Activated T-helper 1 cell treated with anti-CD3 and anti-CD28 coated beads, Interleukin-12 subunit alpha, Interleukin-12 subunit beta, Interleukin-2, Interleukin-4 antibody, amounts not matched to agents 30 ng/mL and 10 ng/mL and 1 ng/mL, durations not matched to agents 14 hours and 24 hours and 36 hours (primary cell): ENCODE measurements at regions of chr9 and their contacts with region 1.

Region 1: GRCh38 chr9:112793213-112793810 is 42.8 kb downstream of the SNX30 start:
- DNase-seq: peak; percentile 67
- H3K4me3 Mint-ChIP-seq: no peak overlapping the region
- H3K27ac Mint-ChIP-seq: no peak overlapping the region
- H3K4me1 Mint-ChIP-seq: peaks cover 7% of the 10 kb centered on the region
- H3K27me3 Mint-ChIP-seq: peaks cover 4% of the 10 kb centered on the region

Region 2: DNA sequence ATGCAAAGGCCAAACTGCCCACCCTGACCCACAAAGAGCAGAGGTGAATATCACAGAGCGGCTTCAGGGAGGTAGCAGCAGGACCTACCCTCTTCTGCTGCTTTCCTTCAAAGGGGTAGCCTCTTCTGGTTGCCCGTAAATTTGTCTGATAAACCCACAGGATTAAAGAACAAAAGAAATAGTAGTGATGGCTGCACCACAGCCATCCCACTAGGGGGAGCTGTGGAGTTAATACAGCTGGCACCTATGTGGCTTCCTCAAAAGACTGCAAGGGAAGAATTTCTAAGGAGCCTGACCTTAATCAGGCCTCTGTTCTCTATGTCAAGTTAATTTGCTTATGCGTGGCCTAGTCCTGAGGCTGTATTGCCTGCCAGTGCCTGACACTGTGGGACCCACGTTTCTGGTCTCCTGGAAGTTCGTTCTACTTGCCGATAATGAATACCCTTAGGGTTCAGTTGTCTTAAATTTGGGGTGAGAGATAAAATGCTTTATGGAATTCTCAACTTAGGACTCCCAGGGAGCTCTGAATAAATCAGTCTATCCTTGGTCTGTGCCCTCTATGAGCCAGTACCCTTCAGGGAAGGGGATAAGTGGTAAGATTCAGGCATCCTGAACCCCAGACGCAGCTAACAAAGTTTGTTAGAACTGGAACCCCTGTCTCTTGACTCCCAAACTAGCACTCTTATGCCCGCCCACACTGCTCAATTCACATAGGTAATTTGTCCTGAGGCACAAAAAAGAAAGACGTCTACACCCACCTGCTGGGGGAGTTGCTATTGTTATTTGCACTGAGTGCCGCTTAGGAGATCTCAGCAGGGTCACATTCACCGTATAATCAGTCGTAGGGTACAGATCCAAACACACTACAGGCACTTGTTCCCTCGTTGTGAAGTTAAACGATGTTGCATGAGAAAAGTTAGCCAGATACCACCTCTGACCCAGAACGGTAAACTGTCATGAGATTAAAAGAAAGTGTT is 695.3 kb before region 1 on chr9:
- intact Hi-C with region 1: loop called (anchors 1 kb)
- DNase-seq: peak; percentile 54
- H3K4me3 Mint-ChIP-seq: no peak overlapping the region
- H3K27ac Mint-ChIP-seq: no peak overlapping the region
- H3K4me1 Mint-ChIP-seq: peaks cover 32% of the 10 kb centered on the region
- H3K27me3 Mint-ChIP-seq: peaks cover 2% of the 10 kb centered on the region

Region 3: DNA sequence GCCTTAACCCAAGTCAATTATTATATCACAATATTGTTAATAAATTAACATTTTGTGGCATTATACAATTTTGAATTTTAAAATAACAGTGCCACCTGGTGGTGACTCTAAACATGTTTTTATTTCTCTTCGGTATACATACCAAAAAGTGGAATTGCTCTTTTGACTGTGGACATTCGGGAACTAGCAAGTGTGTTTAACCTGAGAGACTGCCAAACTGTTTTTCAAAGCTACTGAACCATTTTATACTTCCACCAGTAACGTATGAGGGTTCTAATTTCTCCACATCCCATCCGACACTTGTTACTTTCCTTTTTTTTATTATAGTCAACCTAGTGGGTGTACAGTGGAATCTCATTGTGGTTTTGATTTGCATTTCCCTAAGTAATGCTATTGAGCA is 431.7 kb before region 1 on chr9:
- intact Hi-C with region 1: loop called (anchors 1 kb)
- DNase-seq: no peak
- H3K4me3 Mint-ChIP-seq: no peak overlapping the region
- H3K27ac Mint-ChIP-seq: no peak overlapping the region
- H3K4me1 Mint-ChIP-seq: peaks cover 12% of the 10 kb centered on the region
- H3K27me3 Mint-ChIP-seq: peaks cover 26% of the 10 kb centered on the region

Region 4: DNA sequence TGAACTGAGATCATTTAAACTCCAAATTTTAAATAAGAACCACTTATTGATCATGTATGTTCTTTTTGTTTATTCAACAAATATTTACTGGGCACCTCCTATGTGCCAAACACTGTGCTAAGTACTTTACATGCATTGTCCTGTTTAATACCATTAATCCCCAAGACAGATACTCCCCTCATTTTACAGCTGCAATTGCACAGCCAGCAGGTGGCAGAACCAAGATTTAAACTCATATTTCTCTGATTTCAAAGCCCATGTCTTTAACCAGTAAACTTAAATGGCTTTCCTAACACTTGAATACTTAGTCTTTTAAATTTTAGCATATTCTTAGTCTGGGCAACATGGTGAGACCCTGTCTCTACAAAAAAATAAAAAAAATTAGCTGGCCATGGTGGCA is 350.1 kb before region 1 on chr9:
- intact Hi-C with region 1: loop called (anchors 1 kb)
- DNase-seq: peak; percentile 7
- H3K4me3 Mint-ChIP-seq: no peak overlapping the region
- H3K27ac Mint-ChIP-seq: no peak overlapping the region
- H3K4me1 Mint-ChIP-seq: peaks cover 11% of the 10 kb centered on the region
- H3K27me3 Mint-ChIP-seq: no peaks in the 10 kb centered on the region

Region 5: GRCh38 chr9:112665347-112665746 is 128.0 kb before region 1 on chr9:
- intact Hi-C with region 1: loop called (anchors 5 kb)
- DNase-seq: no peak
- H3K4me3 Mint-ChIP-seq: no peak overlapping the region
- H3K27ac Mint-ChIP-seq: no peak overlapping the region
- H3K4me1 Mint-ChIP-seq: no peaks in the 10 kb centered on the region
- H3K27me3 Mint-ChIP-seq: peaks cover 5% of the 10 kb centered on the region

Region 6: GRCh38 chr9:112750111-112750767 is 43.1 kb before region 1 on chr9 and contains the start of gene SNX30:
- intact Hi-C with region 1: loop called (anchors 5 kb)
- DNase-seq: peak; percentile 78
- H3K4me3 Mint-ChIP-seq: peak within 1 kb of the TSS; percentile 86
- H3K27ac Mint-ChIP-seq: peak within 1 kb of the TSS; percentile 88
- H3K4me1 Mint-ChIP-seq: peaks cover 67% of the 10 kb centered on the region
- H3K27me3 Mint-ChIP-seq: peaks cover 5% of the 10 kb centered on the region
- total RNA-seq, gene SNX30: 1.9 and 2.1 TPM in 2 replicates

Region 7: GRCh38 chr9:113416149-113416721 is 622.9 kb after region 1 on chr9:
- intact Hi-C with region 1: no loop called
- DNase-seq: no peak
- H3K4me3 Mint-ChIP-seq: no peak overlapping the region
- H3K27ac Mint-ChIP-seq: no peak overlapping the region
- H3K4me1 Mint-ChIP-seq: no peaks in the 10 kb centered on the region
- H3K27me3 Mint-ChIP-seq: peaks cover 3% of the 10 kb centered on the region